ENCODE measurements at regions of chr2 and their contacts with region 1.

Region 1: GRCh38 chr2:171922230-171923022 is at the start of gene HAT1:
- DNase-seq: peak; percentile 94 to 99 (median 96)
- ATAC-seq: peak; percentile 95
- H3K4me3 ChIP-seq: peak within 1 kb of the TSS; percentile 93
- H3K4me3 Mint-ChIP-seq: peak within 1 kb of the TSS; percentile 100
- H3K27ac ChIP-seq: peak within 1 kb of the TSS; percentile 83 to 96
- H3K27ac Mint-ChIP-seq: peak within 1 kb of the TSS; percentile 93
- H3K4me1 ChIP-seq: peaks cover 18% of the 10 kb centered on the region
- H3K4me1 Mint-ChIP-seq: peaks cover 47% of the 10 kb centered on the region
- H3K27me3 ChIP-seq: no peaks in the 10 kb centered on the region
- H3K27me3 Mint-ChIP-seq: no peaks in the 10 kb centered on the region
- CTCF ChIP-seq: no peak
- total RNA-seq, gene HAT1: 20.3 to 22.6 TPM

Region 2: DNA sequence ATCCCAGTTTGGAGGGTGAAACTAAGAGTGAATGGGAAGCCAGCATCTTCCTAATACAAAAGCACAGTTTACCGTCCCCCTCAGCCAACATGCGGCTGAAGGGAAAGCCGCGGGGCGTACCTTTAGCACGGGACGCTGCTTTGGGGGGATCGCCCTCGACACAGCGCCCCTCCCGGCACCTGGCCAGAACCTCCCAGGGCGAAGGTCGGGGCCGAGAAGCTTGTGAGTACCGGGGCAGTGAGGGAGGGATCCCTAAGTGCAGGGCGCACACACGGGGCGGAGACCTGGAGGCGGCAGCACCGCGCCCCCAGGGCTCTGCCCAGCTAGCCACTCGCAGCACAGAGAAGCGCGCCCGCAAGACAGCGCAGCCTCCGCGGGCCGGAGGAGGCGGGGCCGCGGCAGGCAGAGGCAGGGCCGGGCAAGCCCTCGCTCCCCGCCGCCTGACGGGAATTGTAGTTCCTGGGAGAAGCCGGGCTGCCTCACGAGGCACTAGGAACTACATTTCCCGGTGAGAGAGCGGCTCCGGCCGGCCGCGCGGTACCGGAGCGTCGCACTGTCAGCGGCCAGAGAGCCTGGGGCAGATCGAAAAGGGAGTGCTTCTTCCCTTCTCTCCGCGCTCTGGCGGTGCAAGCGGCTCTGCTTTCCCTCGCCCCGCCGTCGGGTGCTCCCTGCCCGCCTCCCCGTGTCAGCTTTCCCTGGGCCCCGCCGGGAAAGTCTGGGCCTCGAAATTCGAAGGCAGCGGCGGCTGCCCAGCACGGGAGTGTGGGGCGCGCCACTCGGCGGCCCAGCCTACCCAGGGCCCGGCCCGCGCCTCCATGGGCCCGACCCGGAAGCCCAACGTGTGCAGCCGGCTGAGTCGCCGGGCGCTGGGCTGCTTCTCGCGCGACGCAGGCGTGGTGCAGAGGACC is 488.4 kb before region 1 on chr2 and contains the starts of genes DCAF17 and METTL8:
- CTCF ChIA-PET with region 1: no interaction called
- POLR2A ChIA-PET with region 1: no interaction called
- intact Hi-C with region 1: loop called in 1 of 2 experiments (anchors 10 kb)
- DNase-seq: peak; percentile 84 to 97 (median 92)
- ATAC-seq: peak; percentile 91
- H3K4me3 ChIP-seq: peak within 1 kb of the TSS; percentile 65
- H3K4me3 Mint-ChIP-seq: peak within 1 kb of the TSS; percentile 94
- H3K27ac ChIP-seq: peak within 1 kb of the TSS; percentile 93 to 96
- H3K27ac Mint-ChIP-seq: peak within 1 kb of the TSS; percentile 88
- H3K4me1 ChIP-seq: peaks cover 10% of the 10 kb centered on the region
- H3K4me1 Mint-ChIP-seq: peaks cover 62% of the 10 kb centered on the region
- H3K27me3 ChIP-seq: no peaks in the 10 kb centered on the region
- H3K27me3 Mint-ChIP-seq: no peaks in the 10 kb centered on the region
- CTCF ChIP-seq: peak; percentile 59
- total RNA-seq, gene DCAF17: 13.0 to 14.3 TPM
- total RNA-seq, gene METTL8: 9.7 to 11.5 TPM

Region 3: DNA sequence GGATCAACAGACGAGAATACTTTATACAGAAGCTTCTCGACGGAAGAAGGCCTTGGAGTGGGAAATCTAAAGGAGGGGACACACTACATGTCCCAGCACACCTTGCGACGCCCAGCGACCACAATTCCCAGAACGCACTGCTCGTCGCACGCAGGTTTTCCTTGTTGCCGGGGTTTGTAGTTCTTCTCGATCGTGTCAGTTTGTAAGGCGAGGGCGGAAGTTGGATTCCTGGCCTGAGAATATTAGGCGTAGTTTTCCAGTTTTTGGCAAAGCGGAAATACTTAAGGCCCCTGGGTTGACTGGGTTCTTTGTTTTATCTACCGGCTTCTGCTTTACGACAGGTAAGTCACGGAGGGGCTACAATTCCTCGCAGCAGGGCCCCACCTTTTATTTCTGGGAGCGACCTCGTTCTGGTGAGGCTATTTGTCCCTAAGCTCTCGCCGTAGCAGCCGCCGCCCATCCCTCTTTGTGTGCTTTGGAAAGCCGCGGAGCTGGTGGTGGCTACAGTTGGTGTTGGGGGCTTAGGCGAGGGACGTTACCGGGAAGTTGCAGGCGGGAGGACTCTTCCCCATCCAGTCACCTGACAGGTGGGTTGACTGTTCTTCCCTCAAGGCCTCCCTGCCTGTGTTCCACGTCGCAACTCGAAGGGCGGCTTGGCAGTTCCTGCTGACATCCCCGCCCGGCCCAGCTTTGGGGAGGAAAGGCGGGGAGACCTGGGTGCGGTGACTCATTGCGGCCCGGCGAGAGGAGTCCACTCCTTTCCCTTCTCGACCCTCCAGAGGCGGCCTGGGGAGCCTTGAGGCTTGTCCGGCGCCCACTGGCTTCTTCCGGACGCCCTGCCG is 234.9 kb before region 1 on chr2 and contains the start of gene DYNC1I2:
- CTCF ChIA-PET with region 1: no interaction called
- POLR2A ChIA-PET with region 1: no interaction called
- intact Hi-C with region 1: loop called in 1 of 2 experiments (anchors 5 kb)
- DNase-seq: peak; percentile 44 to 86 (median 60)
- ATAC-seq: peak; percentile 81
- H3K4me3 ChIP-seq: peak within 1 kb of the TSS; percentile 97
- H3K4me3 Mint-ChIP-seq: peak within 1 kb of the TSS; percentile 96
- H3K27ac ChIP-seq: peak within 1 kb of the TSS; percentile 49 to 52
- H3K27ac Mint-ChIP-seq: peak within 1 kb of the TSS; percentile 82
- H3K4me1 ChIP-seq: peaks cover 8% of the 10 kb centered on the region
- H3K4me1 Mint-ChIP-seq: peaks cover 36% of the 10 kb centered on the region
- H3K27me3 ChIP-seq: no peaks in the 10 kb centered on the region
- H3K27me3 Mint-ChIP-seq: no peaks in the 10 kb centered on the region
- CTCF ChIP-seq: no peak
- total RNA-seq, gene DYNC1I2: 10.5 to 11.6 TPM

Region 4: GRCh38 chr2:171893824-171894611 is 28.4 kb before region 1 on chr2 and contains the start of gene SLC25A12:
- CTCF ChIA-PET with region 1: interaction called, 4 read pairs
- POLR2A ChIA-PET with region 1: interaction called, 14 read pairs
- intact Hi-C with region 1: loop called (anchors 2 kb)
- DNase-seq: peak; percentile 43 to 87 (median 68)
- ATAC-seq: peak; percentile 92
- H3K4me3 ChIP-seq: peak within 1 kb of the TSS; percentile 93
- H3K4me3 Mint-ChIP-seq: peak within 1 kb of the TSS; percentile 94
- H3K27ac ChIP-seq: peak within 1 kb of the TSS; percentile 21 to 33
- H3K27ac Mint-ChIP-seq: peak within 1 kb of the TSS; percentile 80
- H3K4me1 ChIP-seq: peaks cover 6% of the 10 kb centered on the region
- H3K4me1 Mint-ChIP-seq: peaks cover 44% of the 10 kb centered on the region
- H3K27me3 ChIP-seq: peaks cover 0 to 3% of the 10 kb centered on the region in 2 experiments
- H3K27me3 Mint-ChIP-seq: no peaks in the 10 kb centered on the region
- CTCF ChIP-seq: no peak
- total RNA-seq, gene SLC25A12: 8.7 to 9.5 TPM

Region 5: GRCh38 chr2:171985076-171985475 is 62.6 kb after region 1 on chr2:
- CTCF ChIA-PET with region 1: no interaction called
- POLR2A ChIA-PET with region 1: no interaction called
- intact Hi-C with region 1: no loop called
- DNase-seq: no peak
- ATAC-seq: no peak
- H3K4me3 ChIP-seq: no peak overlapping the region
- H3K4me3 Mint-ChIP-seq: no peak overlapping the region
- H3K27ac ChIP-seq: no peak overlapping the region
- H3K27ac Mint-ChIP-seq: no peak overlapping the region
- H3K4me1 ChIP-seq: no peaks in the 10 kb centered on the region
- H3K4me1 Mint-ChIP-seq: no peaks in the 10 kb centered on the region
- H3K27me3 ChIP-seq: no peaks in the 10 kb centered on the region
- H3K27me3 Mint-ChIP-seq: no peaks in the 10 kb centered on the region
- CTCF ChIP-seq: no peak

Region 6: GRCh38 chr2:171999604-172000469 is 77.4 kb after region 1 on chr2 and contains the start of gene METAP1D:
- CTCF ChIA-PET with region 1: no interaction called
- POLR2A ChIA-PET with region 1: interaction called, 4 read pairs
- intact Hi-C with region 1: loop called in 1 of 2 experiments (anchors 2 kb)
- DNase-seq: peak; percentile 61 to 93 (median 82)
- ATAC-seq: peak; percentile 90
- H3K4me3 ChIP-seq: peak within 1 kb of the TSS; percentile 75
- H3K4me3 Mint-ChIP-seq: peak within 1 kb of the TSS; percentile 88
- H3K27ac ChIP-seq: peak within 1 kb of the TSS; percentile 23 to 38
- H3K27ac Mint-ChIP-seq: peak within 1 kb of the TSS; percentile 74
- H3K4me1 ChIP-seq: peaks cover 12% of the 10 kb centered on the region
- H3K4me1 Mint-ChIP-seq: peaks cover 23% of the 10 kb centered on the region
- H3K27me3 ChIP-seq: no peaks in the 10 kb centered on the region
- H3K27me3 Mint-ChIP-seq: peaks cover 8% of the 10 kb centered on the region
- CTCF ChIP-seq: no peak
- total RNA-seq, gene METAP1D: 7.2 to 7.9 TPM

Region 7: GRCh38 chr2:172128484-172128883 is 206.1 kb after region 1 on chr2:
- CTCF ChIA-PET with region 1: no interaction called
- POLR2A ChIA-PET with region 1: no interaction called
- intact Hi-C with region 1: no loop called
- DNase-seq: no peak
- ATAC-seq: no peak
- H3K4me3 ChIP-seq: no peak overlapping the region
- H3K4me3 Mint-ChIP-seq: no peak overlapping the region
- H3K27ac ChIP-seq: no peak overlapping the region
- H3K27ac Mint-ChIP-seq: no peak overlapping the region
- H3K4me1 ChIP-seq: no peaks in the 10 kb centered on the region
- H3K4me1 Mint-ChIP-seq: no peaks in the 10 kb centered on the region
- H3K27me3 ChIP-seq: peaks cover 0 to 2% of the 10 kb centered on the region in 2 experiments
- H3K27me3 Mint-ChIP-seq: no peaks in the 10 kb centered on the region
- CTCF ChIP-seq: no peak

Region 8: DNA sequence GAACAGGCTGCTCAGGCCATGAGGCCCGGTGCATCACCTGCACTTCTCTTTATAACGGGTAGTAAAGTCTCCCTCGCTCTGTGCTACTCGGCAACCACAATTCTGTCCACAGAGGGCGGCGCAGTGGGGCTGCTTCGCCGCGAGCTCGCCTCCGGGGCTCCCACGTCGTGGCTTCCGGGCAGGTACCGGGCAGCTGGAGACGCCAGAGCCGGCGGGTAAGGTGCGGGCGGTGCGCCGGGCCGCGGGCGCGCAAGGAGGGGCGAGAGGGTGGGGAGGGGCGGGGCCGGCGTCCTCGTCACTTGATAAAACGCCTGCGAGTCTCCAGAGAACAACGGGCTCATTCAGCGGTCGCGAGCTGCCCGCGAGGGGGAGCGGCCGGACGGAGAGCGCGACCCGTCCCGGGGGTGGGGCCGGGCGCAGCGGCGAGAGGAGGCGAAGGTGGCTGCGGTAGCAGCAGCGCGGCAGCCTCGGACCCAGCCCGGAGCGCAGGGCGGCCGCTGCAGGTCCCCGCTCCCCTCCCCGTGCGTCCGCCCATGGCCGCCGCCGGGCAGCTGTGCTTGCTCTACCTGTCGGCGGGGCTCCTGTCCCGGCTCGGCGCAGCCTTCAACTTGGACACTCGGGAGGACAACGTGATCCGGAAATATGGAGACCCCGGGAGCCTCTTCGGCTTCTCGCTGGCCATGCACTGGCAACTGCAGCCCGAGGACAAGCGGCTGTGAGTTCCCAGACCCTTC is 505.0 kb after region 1 on chr2 and contains the start of gene ITGA6:
- CTCF ChIA-PET with region 1: no interaction called
- POLR2A ChIA-PET with region 1: no interaction called
- intact Hi-C with region 1: loop called in 1 of 2 experiments (anchors 5 kb)
- DNase-seq: peak; percentile 65 to 91 (median 72)
- ATAC-seq: peak; percentile 73
- H3K4me3 ChIP-seq: peak within 1 kb of the TSS; percentile 78
- H3K4me3 Mint-ChIP-seq: peak within 1 kb of the TSS; percentile 93
- H3K27ac ChIP-seq: peak within 1 kb of the TSS; percentile 13 to 74
- H3K27ac Mint-ChIP-seq: peak within 1 kb of the TSS; percentile 89
- H3K4me1 ChIP-seq: peaks cover 51% of the 10 kb centered on the region
- H3K4me1 Mint-ChIP-seq: peaks cover 45% of the 10 kb centered on the region
- H3K27me3 ChIP-seq: no peaks in the 10 kb centered on the region
- H3K27me3 Mint-ChIP-seq: no peaks in the 10 kb centered on the region
- CTCF ChIP-seq: no peak
- total RNA-seq, gene ITGA6: 53.5 to 58.0 TPM